ENCODE measurements at regions of chr14 and their contacts with region 1.

Region 1: DNA sequence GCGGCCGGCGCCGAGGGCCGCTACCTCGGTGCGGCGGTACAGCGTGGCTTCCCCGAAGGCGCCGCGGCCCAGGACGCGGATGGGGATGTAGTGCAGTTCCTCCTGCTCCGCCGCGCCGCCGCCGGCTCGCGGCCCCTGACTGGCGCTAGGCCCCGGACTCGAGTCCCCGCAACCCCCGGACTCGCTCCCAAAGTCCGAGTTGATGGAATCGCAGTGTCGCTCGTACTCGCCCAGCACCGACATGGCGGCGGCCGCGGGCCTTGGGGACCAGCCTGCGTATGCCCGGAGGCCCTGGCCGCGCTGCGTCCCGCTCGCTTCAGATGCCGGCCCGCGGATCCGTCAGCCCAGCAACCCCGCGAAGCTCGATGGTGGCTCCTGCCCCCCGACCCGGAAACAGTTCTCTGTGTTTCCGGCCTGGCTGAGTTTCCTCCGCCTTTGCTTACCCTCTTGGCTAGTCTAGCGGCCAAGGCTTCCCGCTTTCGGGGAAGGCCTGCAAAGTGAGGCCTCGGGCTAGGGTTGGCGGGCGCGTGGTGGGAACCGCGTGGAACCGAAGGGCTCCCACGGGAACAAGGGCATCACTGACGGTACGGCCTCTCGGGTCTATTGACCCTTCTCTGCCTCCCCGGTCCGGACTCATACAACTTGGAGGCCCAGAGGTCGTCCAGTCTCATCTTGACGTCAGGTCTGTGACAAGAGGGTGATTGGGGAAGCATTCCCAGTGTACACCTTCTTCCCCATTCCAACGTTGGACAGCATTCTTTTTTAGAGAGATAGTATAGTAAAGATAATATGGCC is at the start of gene NEK9:
- DNase-seq: peak; percentile 93
- total RNA-seq, gene NEK9: 47.9 and 49.3 TPM in 2 replicates

Region 2: GRCh38 chr14:75307700-75308379 is 181.0 kb after region 1 on chr14:
- in situ Hi-C with region 1: loop called (anchors 25 kb)
- DNase-seq: peak; percentile 85